ENCODE measurements at regions of chr9 and their contacts with region 1.

Region 1: DNA sequence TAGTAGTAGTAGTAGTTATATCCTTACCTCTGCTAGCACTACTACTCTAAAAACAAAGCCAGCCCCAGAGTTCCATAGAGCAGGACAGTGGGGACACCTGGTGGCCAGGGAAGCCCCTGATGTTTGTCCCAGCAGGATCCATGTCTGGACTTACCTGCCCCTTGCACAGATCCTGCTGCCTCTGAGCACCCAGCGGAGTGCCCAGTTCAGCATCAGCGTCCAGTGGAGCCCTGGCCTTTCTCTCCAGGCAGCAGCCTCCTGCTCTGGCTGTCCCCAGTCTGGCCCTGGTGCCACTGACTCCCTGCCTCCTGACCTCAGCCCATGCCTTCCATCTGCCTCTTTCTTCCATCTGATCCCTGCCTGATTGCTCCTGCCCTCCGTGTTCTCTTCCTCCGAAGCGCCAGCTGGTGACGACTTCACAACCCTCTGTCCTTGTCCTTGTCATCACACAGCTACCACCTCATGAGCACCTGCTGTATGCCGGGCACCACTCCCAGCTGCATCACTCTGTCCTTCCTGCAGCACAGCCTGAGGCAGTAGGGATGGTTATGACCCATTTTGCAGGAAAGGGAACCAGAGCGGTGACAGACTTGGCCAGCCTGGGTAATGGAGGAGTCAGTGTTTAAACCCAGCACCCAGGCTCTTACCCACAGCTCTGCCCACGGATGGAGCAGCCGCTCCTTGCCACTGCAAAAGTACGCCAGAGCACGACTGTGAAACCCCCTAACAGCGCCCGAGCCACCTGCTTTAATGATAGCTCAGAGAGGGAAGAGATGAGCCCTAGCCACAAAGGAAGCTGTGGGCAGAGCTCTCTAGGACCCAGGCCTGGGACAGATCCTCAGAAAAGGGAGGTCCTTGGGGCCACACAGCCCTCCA is 11.5 kb downstream of the SARDH start:
- DNase-seq: peak; percentile 42 to 73 (median 65)
- H3K4me3 ChIP-seq: no peak overlapping the region
- H3K27ac ChIP-seq: no peak overlapping the region
- H3K4me1 ChIP-seq: peaks cover 0 to 10% (median 6%) of the 10 kb centered on the region in 4 experiments
- H3K27me3 ChIP-seq: no peaks in the 10 kb centered on the region

Region 2: GRCh38 chr9:133532937-133533668 is 193.5 kb before region 1 on chr9:
- CTCF ChIA-PET with region 1: interaction called, 39 read pairs
- POLR2A ChIA-PET with region 1: no interaction called
- DNase-seq: peak; percentile 85 to 91 (median 90)
- H3K4me3 ChIP-seq: no peak overlapping the region
- H3K27ac ChIP-seq: no peak overlapping the region
- H3K4me1 ChIP-seq: peaks cover 0 to 28% (median 23%) of the 10 kb centered on the region in 4 experiments
- H3K27me3 ChIP-seq: peaks cover 0 to 43% (median 11%) of the 10 kb centered on the region in 5 experiments

Region 3: DNA sequence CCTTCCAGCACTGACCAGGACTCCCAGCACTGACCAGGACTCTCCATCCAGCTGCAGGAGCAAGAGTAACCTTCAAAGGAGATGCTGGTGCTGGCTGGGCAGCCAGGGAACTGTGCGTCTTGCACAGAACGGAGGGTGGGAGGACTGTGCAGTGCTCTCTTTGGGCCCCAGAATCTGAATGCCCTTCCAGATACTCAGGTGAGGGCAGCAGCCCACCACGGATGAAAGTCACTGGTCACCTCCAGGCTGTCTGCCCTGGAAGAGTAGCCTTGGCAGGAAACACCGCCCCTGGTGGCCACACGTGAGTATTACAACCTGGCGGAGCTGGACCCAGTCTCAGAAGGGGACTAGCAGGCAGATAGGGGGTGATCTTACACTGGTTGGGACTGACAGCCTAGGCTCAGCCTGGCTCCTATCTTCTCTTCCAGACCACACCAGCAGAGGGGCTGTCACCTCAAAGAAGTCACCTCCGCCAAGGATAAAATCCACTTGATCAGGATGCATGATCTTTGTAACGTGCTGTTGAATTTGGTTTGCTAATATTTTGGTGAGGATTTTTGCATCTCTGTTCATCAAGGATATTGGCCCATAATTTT is 16.3 kb after region 1 on chr9:
- CTCF ChIA-PET with region 1: interaction called, 14 read pairs
- POLR2A ChIA-PET with region 1: no interaction called
- DNase-seq: peak; percentile 69 to 80 (median 72)
- H3K4me3 ChIP-seq: no peak overlapping the region
- H3K27ac ChIP-seq: no peak overlapping the region
- H3K4me1 ChIP-seq: peaks cover 0 to 10% (median 8%) of the 10 kb centered on the region in 4 experiments
- H3K27me3 ChIP-seq: no peaks in the 10 kb centered on the region

Region 4: DNA sequence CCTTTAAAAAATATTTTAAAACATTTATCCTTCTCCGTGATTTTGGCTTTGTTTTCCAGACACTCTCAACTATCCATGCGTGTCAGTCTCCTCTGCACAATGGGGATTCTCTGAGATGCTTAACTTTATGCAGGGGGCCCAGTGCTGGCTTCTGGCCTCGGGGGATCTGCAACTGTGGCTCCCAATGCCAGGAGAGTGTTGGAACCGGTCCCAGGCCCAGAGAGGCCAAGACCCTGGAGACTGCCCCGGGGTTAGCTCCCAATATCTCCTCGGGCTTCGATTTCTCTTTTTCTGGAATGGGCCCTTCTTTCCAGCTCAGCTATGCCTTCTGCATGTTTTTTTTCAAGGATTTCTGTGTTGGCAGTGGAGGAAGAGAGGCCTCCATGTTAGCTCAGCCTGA is 31.6 kb after region 1 on chr9:
- CTCF ChIA-PET with region 1: no interaction called
- POLR2A ChIA-PET with region 1: no interaction called
- DNase-seq: no peak
- H3K4me3 ChIP-seq: no peak overlapping the region
- H3K27ac ChIP-seq: no peak overlapping the region
- H3K4me1 ChIP-seq: peaks cover 0 to 5% (median 2%) of the 10 kb centered on the region in 4 experiments
- H3K27me3 ChIP-seq: no peaks in the 10 kb centered on the region

Region 5: DNA sequence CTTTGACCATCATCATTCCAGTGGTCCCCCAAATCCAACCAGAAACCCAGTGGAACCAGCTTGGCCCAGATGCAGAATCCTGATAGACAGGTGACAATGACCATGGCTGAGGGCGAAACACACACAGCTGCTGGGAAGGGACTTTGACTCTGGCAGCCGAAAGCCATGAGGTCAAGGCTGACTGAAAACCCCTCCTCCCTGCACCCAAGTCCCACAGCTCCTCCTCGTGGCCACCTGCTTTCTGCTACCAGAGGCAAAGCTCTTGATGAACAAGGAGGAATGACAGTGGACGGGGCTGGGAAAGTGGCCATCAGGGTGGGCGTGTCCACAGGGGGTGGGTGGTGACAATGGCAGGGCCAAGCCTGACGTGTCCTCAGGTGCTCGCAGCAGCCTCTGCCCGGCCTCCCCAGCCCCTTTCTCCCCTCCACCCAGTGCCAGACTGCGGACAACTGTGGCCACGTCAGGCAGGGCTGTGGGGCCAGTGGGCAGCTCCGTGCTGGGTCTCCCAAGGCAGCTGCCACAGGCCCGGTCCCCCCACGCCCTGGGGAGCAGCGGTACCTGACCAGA is 42.3 kb after region 1 on chr9:
- CTCF ChIA-PET with region 1: no interaction called
- POLR2A ChIA-PET with region 1: no interaction called
- DNase-seq: peak in 1 of 3 donors; percentile 14
- H3K4me3 ChIP-seq: no peak overlapping the region
- H3K27ac ChIP-seq: no peak overlapping the region
- H3K4me1 ChIP-seq: no peaks in the 10 kb centered on the region
- H3K27me3 ChIP-seq: no peaks in the 10 kb centered on the region

Region 6: GRCh38 chr9:134128727-134129679 is 402.4 kb after region 1 on chr9:
- CTCF ChIA-PET with region 1: no interaction called
- POLR2A ChIA-PET with region 1: no interaction called
- DNase-seq: no peak
- H3K4me3 ChIP-seq: no peak overlapping the region
- H3K27ac ChIP-seq: no peak overlapping the region
- H3K4me1 ChIP-seq: no peaks in the 10 kb centered on the region
- H3K27me3 ChIP-seq: no peaks in the 10 kb centered on the region

Measured in common myeloid progenitor, CD34-positive (primary cell).